ENCODE measurements at regions of chr7 and their contacts with region 1.

Region 1: GRCh38 chr7:129367700-129368388 is 66.4 kb upstream of the STRIP2 start:
- DNase-seq: peak; percentile 79
- ATAC-seq: peak; percentile 85
- H3K4me3 ChIP-seq: peak overlapping the region in 3 of 5 experiments; percentile 15 to 32 (median 23)
- H3K4me3 Mint-ChIP-seq: peak overlapping the region; percentile 69
- H3K27ac ChIP-seq: peak overlapping the region in 1 of 2 donors; percentile 67
- H3K27ac Mint-ChIP-seq: peak overlapping the region; percentile 66
- H3K4me1 ChIP-seq: peaks cover 14 to 15% of the 10 kb centered on the region in 2 donors
- H3K4me1 Mint-ChIP-seq: peaks cover 21% of the 10 kb centered on the region
- H3K27me3 ChIP-seq: no peaks in the 10 kb centered on the region
- H3K27me3 Mint-ChIP-seq: no peaks in the 10 kb centered on the region
- CTCF ChIP-seq: peak; percentile 88

Region 2: GRCh38 chr7:129389829-129390228 is 22.0 kb after region 1 on chr7:
- CTCF ChIA-PET with region 1: interaction called, 11 read pairs
- POLR2A ChIA-PET with region 1: no interaction called
- intact Hi-C with region 1: no loop called
- DNase-seq: no peak
- ATAC-seq: no peak
- H3K4me3 ChIP-seq: no peak overlapping the region
- H3K4me3 Mint-ChIP-seq: no peak overlapping the region
- H3K27ac ChIP-seq: no peak overlapping the region
- H3K27ac Mint-ChIP-seq: no peak overlapping the region
- H3K4me1 ChIP-seq: no peaks in the 10 kb centered on the region
- H3K4me1 Mint-ChIP-seq: no peaks in the 10 kb centered on the region
- H3K27me3 ChIP-seq: no peaks in the 10 kb centered on the region
- H3K27me3 Mint-ChIP-seq: no peaks in the 10 kb centered on the region
- CTCF ChIP-seq: no peak

Region 3: DNA sequence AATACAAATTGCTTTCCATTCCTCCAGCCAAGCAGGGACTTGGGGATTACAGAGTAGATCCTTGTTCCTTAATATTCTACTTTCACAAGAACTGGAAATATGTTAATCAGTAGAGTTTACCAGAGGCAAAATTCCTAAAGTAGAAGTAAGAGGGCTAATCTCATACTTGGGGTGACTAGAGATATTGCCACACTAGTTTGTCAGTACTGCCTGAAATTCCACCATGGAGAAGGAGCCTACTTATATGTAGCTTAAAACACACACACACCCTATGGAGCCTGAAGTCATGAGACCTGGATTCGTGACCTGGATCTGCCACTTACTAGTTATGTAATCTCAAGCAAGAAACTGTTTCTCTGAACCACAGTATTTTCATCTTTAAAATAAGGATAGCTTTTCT is 100.2 kb after region 1 on chr7:
- CTCF ChIA-PET with region 1: interaction called, 156 read pairs
- POLR2A ChIA-PET with region 1: no interaction called
- intact Hi-C with region 1: loop called (anchors 1 kb)
- DNase-seq: no peak
- ATAC-seq: no peak
- H3K4me3 ChIP-seq: no peak overlapping the region
- H3K4me3 Mint-ChIP-seq: no peak overlapping the region
- H3K27ac ChIP-seq: no peak overlapping the region
- H3K27ac Mint-ChIP-seq: no peak overlapping the region
- H3K4me1 ChIP-seq: no peaks in the 10 kb centered on the region
- H3K4me1 Mint-ChIP-seq: peaks cover 1% of the 10 kb centered on the region
- H3K27me3 ChIP-seq: no peaks in the 10 kb centered on the region
- H3K27me3 Mint-ChIP-seq: no peaks in the 10 kb centered on the region
- CTCF ChIP-seq: no peak

Region 4: DNA sequence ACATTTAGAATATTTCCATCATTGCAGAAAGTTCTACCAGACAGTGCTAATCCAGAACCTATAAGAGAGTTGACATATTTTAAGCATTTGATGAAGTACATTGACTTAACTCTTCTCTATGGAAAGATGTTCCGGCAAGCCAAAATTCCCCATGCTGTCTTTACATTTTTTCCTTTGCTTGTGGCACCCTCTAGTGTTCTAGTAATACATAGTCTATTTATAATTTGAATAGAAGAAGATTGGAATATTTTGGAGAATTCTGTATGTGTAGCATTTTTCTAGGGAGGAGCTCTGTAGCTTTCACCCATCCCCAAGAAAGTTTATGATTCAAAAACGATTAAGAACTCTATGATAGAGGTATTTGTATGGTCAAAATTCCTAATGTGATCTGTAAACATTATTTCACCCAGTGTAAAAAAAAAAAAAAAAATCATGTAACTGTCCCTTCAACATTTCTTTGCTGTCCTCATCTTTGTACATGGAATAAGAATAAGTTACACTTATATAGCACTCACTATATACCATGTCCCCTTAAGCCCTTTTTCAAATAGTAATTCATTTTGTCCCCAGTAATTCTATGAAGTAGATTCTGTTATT is 276.9 kb after region 1 on chr7:
- CTCF ChIA-PET with region 1: interaction called, 42 read pairs
- POLR2A ChIA-PET with region 1: no interaction called
- intact Hi-C with region 1: loop called (anchors 1 kb)
- DNase-seq: peak; percentile 36
- ATAC-seq: no peak
- H3K4me3 ChIP-seq: no peak overlapping the region
- H3K4me3 Mint-ChIP-seq: no peak overlapping the region
- H3K27ac ChIP-seq: no peak overlapping the region
- H3K27ac Mint-ChIP-seq: no peak overlapping the region
- H3K4me1 ChIP-seq: no peaks in the 10 kb centered on the region
- H3K4me1 Mint-ChIP-seq: peaks cover 7% of the 10 kb centered on the region
- H3K27me3 ChIP-seq: no peaks in the 10 kb centered on the region
- H3K27me3 Mint-ChIP-seq: no peaks in the 10 kb centered on the region
- CTCF ChIP-seq: peak; percentile 49

Measured in B cell (primary cell).